A549 (cell line): ENCODE measurements at regions of chr5 and their contacts with region 1.

Region 1: DNA sequence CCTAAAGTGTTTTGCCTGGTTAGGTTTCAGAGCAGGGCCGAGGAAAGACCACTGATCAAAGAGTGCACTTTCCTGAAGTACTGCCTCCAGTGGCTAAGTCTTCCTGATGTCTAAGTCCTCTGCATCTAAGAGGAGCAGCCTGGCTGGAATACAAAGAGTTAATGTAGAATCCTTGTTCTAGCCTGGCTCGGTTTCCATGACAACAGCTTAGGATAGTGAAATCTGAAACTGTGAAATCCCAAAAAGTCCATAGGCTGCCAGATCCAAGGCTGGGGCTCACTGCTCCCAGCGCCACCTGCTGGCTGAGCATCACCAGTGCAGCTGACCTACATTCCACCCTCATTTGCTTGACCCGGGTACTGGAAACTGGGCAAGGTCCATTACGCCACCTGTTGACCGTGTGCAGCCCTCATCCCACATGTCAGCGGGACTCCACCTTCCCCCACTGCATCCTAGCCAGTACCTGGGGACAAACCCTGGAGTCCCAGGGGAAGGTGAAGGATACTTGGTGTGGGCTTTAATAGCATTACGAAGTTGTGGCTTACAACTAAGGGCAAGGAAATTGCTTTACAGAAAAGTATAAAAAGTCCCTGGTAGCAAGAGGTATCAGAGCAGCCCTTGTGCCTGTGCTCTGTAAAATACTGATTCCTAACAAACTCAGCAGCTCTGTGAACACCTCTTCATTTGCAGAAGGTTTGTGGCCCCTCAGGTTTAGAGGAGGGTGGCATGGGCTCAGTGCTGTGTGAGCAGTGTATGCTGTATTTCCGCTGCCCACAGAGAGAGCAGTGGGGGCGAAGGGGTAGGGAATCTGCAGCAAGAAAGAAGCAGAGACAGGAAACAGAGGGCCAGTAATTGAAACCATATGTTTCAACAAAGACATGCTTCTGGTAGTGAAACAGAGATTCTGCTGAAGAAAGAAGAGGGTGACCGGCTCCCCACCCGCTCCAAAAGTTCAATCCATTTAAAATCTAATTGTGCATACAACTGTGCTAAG is 36.0 kb downstream of the PCDHGC5 start:
- DNase-seq: peak; percentile 89 to 92
- ATAC-seq: peak; percentile 92 to 95
- H3K4me3 ChIP-seq: no peak overlapping the region
- H3K27ac ChIP-seq: no peak overlapping the region
- H3K4me1 ChIP-seq: peaks cover 36% of the 10 kb centered on the region
- CTCF ChIP-seq: peak; percentile 99
- EP300 ChIP-seq: no peak
- POLR2A ChIP-seq: no peak
- RAD21 ChIP-seq: peak; percentile 82 to 84

Region 2: GRCh38 chr5:141338538-141339306 is 186.2 kb before region 1 on chr5 and contains the start of gene PCDHGA2:
- CTCF ChIA-PET with region 1: interaction called, 13 read pairs
- POLR2A ChIA-PET with region 1: interaction called, 3 read pairs
- DNase-seq: peak; percentile 24 to 74
- ATAC-seq: peak; percentile 54 to 87; a peak in 4 of 6 replicates
- H3K4me3 ChIP-seq: peak within 1 kb of the TSS; percentile 45
- H3K27ac ChIP-seq: peak within 1 kb of the TSS; percentile 59 to 70
- H3K4me1 ChIP-seq: no peaks in the 10 kb centered on the region
- CTCF ChIP-seq: peak; percentile 35; the same call in 2 of the 3 replicates
- EP300 ChIP-seq: no peak
- POLR2A ChIP-seq: no peak
- RAD21 ChIP-seq: peak; percentile 46 to 53; a peak in 4 of 5 replicates
- polyA plus RNA-seq, gene PCDHGA2: 1.6 and 1.7 TPM in 2 replicates

Region 3: DNA sequence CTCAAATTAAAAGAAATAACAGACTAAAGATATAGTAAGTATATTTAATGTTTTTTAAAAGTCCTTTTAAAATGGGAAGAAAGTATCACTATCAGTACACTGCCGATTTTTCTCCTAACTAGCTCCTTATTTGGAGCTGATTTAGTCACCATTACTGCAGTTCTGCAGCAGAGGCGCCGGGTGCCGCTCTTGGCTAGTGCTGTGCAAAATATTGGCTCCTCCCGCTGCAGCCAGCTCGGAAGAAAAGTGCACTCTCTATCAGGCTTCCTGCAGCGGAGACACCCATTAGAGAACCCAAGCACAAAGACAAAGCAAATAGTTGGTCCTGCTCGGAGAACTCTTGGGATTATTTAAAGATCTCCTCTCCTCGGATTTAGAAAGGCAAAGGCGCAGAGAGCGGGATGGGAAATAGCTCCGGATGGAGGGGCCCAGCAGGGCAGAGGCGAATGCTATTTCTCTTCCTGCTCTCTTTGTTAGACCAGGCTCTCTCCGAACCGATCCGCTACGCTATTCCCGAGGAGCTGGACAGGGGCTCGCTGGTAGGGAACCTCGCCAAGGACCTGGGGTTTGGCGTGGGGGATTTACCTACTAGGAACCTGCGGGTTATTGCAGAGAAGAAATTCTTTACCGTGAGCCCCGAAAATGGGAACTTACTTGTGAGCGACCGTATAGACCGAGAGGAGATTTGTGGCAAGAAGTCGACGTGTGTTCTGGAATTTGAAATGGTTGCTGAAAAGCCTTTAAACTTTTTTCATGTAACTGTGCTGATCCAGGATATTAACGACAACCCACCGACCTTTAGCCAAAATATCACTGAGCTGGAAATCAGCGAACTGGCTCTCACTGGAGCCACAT is 154.7 kb before region 1 on chr5 and contains the start of gene PCDHGB3:
- CTCF ChIA-PET with region 1: interaction called, 20 read pairs
- POLR2A ChIA-PET with region 1: no interaction called
- DNase-seq: peak in 1 of 2 experiments; percentile 55
- ATAC-seq: peak; percentile 90 to 96
- H3K4me3 ChIP-seq: peak within 1 kb of the TSS; percentile 29
- H3K27ac ChIP-seq: peak within 1 kb of the TSS; percentile 2 to 54; a peak in 2 of 6 replicates
- H3K4me1 ChIP-seq: no peaks in the 10 kb centered on the region
- CTCF ChIP-seq: peak; percentile 28; the same call in 2 of the 3 replicates
- EP300 ChIP-seq: no peak
- POLR2A ChIP-seq: no peak
- RAD21 ChIP-seq: peak; percentile 50 to 52
- polyA plus RNA-seq, gene PCDHGB3: 1.1 and 1.2 TPM in 2 replicates

Region 4: GRCh38 chr5:141402553-141403260 is 122.2 kb before region 1 on chr5 and contains the start of gene PCDHGA9:
- CTCF ChIA-PET with region 1: interaction called, 28 read pairs
- POLR2A ChIA-PET with region 1: no interaction called
- DNase-seq: no peak
- ATAC-seq: no peak
- H3K4me3 ChIP-seq: no peak within 1 kb of the TSS
- H3K27ac ChIP-seq: no peak within 1 kb of the TSS
- H3K4me1 ChIP-seq: no peaks in the 10 kb centered on the region
- CTCF ChIP-seq: no peak
- EP300 ChIP-seq: no peak
- POLR2A ChIP-seq: no peak
- RAD21 ChIP-seq: no peak
- polyA plus RNA-seq, gene PCDHGA9: 0.22 and 0.40 TPM in 2 replicates

Region 5: DNA sequence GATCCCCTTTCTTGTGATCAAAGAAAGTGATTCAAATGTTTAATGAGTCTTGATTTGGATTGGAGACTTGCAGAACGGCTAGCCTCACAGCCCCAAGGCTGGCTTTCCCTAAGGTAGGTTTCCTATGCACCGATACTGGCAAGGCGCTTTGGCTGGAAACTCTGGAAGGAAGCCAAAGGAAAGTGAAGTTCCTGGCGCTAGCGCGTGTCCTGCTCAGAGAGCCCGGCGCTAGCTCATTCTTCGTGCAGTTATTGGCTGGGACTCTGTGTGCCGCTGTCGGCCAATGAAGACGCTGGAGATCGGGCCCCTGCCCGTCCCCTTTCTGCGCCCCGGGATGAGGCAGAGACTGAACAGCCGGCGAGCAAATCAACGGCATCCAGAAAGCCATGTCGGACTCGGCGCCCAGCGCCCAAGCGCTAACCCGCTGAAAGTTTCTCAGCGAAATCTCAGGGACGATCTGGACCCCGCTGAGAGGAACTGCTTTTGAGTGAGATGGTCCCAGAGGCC is 49.2 kb before region 1 on chr5 and contains the start of gene PCDHGC3:
- CTCF ChIA-PET with region 1: interaction called, 24 read pairs
- POLR2A ChIA-PET with region 1: no interaction called
- DNase-seq: peak; percentile 87 to 95
- ATAC-seq: peak; percentile 99 to 100
- H3K4me3 ChIP-seq: peak within 1 kb of the TSS; percentile 55
- H3K27ac ChIP-seq: peak within 1 kb of the TSS; percentile 38 to 78
- H3K4me1 ChIP-seq: no peaks in the 10 kb centered on the region
- CTCF ChIP-seq: peak; percentile 25; the same call in 1 of the 3 replicates
- EP300 ChIP-seq: no peak
- POLR2A ChIP-seq: peak; percentile 17; the same call in 1 of the 2 replicates
- RAD21 ChIP-seq: peak; percentile 45 to 64
- polyA plus RNA-seq, gene PCDHGC3: 1.6 and 1.9 TPM in 2 replicates

Region 6: DNA sequence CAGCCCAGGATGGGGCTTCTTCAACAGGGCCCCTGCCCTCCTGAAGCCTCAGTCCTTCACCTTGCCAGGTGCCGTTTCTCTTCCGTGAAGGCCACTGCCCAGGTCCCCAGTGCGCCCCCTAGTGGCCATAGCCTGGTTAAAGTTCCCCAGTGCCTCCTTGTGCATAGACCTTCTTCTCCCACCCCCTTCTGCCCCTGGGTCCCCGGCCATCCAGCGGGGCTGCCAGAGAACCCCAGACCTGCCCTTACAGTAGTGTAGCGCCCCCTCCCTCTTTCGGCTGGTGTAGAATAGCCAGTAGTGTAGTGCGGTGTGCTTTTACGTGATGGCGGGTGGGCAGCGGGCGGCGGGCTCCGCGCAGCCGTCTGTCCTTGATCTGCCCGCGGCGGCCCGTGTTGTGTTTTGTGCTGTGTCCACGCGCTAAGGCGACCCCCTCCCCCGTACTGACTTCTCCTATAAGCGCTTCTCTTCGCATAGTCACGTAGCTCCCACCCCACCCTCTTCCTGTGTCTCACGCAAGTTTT is 12.5 kb before region 1 on chr5:
- CTCF ChIA-PET with region 1: interaction called, 163 read pairs
- POLR2A ChIA-PET with region 1: no interaction called
- DNase-seq: peak; percentile 62 to 63
- ATAC-seq: peak in 1 of 2 experiments; percentile 75; a peak in 3 of 6 replicates
- H3K4me3 ChIP-seq: no peak overlapping the region
- H3K27ac ChIP-seq: no peak overlapping the region
- H3K4me1 ChIP-seq: no peaks in the 10 kb centered on the region
- CTCF ChIP-seq: peak; percentile 65
- EP300 ChIP-seq: no peak
- POLR2A ChIP-seq: no peak
- RAD21 ChIP-seq: peak; percentile 20 to 42; a peak in 3 of 5 replicates